ENCODE measurements at regions of chr2 and their contacts with region 1.

Region 1: GRCh38 chr2:73939419-73939818 is 12.7 kb downstream of the DGUOK start:
- DNase-seq: peak; percentile 56
- H3K4me3 Mint-ChIP-seq: no peak overlapping the region
- H3K27ac Mint-ChIP-seq: peak overlapping the region; percentile 73
- H3K4me1 Mint-ChIP-seq: peaks cover 85% of the 10 kb centered on the region
- H3K27me3 Mint-ChIP-seq: no peaks in the 10 kb centered on the region

Region 2: GRCh38 chr2:73176881-73177644 is 762.4 kb before region 1 on chr2:
- CTCF ChIA-PET with region 1: no interaction called
- POLR2A ChIA-PET with region 1: no interaction called
- intact Hi-C with region 1: no loop called
- DNase-seq: peak; percentile 91
- H3K4me3 Mint-ChIP-seq: peak overlapping the region; percentile 77
- H3K27ac Mint-ChIP-seq: no peak overlapping the region
- H3K4me1 Mint-ChIP-seq: peaks cover 26% of the 10 kb centered on the region
- H3K27me3 Mint-ChIP-seq: peaks cover 31% of the 10 kb centered on the region

Region 3: DNA sequence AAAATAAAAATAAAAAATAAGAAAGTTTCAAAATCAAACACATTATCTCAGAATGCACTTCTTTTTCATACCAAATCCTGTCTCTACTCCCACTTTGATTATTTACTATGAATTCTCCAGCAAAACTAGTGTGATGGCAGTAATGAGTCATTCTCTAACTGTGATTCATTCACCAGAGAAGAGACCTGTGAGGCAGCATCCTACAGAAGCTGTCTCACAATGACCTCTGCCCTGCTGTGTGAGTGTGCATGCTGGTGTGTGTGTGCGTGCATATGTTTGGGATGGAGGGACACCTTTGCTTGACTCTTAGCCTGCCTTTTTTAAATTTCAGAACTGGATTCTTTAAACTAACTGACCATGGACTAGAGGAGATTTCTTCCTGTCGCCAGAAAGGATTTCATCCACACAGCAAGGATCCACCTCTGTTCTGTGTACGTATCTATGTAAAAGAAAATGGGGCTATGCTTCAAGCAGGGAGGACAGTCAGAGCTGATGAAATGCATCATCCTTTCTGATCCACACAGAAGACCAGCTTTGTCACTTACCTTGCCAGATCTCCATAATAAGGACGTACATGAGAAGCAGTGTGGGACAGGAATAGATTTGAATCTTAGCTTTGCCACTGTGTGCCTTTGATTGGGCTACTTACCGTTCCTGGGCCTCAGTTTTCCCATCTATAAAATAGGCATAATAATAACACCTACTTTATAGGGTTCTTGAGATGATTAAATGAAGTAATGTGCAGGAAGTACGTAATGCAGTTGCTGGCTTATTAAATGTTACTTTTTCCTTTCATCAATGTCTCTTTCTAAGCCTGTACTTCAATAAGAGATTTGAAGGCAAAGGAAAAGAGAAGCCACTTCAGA is 79.5 kb before region 1 on chr2:
- CTCF ChIA-PET with region 1: no interaction called
- POLR2A ChIA-PET with region 1: interaction called, 4 read pairs
- intact Hi-C with region 1: loop called (anchors 2 kb)
- DNase-seq: peak; percentile 76
- H3K4me3 Mint-ChIP-seq: no peak overlapping the region
- H3K27ac Mint-ChIP-seq: peak overlapping the region; percentile 59
- H3K4me1 Mint-ChIP-seq: peaks cover 33% of the 10 kb centered on the region
- H3K27me3 Mint-ChIP-seq: no peaks in the 10 kb centered on the region

Region 4: GRCh38 chr2:73896362-73897239 is 42.8 kb before region 1 on chr2:
- CTCF ChIA-PET with region 1: interaction called, 4 read pairs
- POLR2A ChIA-PET with region 1: no interaction called
- intact Hi-C with region 1: loop called (anchors 5 kb)
- DNase-seq: peak; percentile 62
- H3K4me3 Mint-ChIP-seq: no peak overlapping the region
- H3K27ac Mint-ChIP-seq: peak overlapping the region; percentile 73
- H3K4me1 Mint-ChIP-seq: peaks cover 23% of the 10 kb centered on the region
- H3K27me3 Mint-ChIP-seq: no peaks in the 10 kb centered on the region

Region 5: GRCh38 chr2:74168739-74169138 is 229.3 kb after region 1 on chr2:
- CTCF ChIA-PET with region 1: no interaction called
- POLR2A ChIA-PET with region 1: no interaction called
- intact Hi-C with region 1: no loop called
- DNase-seq: no peak
- H3K4me3 Mint-ChIP-seq: no peak overlapping the region
- H3K27ac Mint-ChIP-seq: peak overlapping the region; percentile 74
- H3K4me1 Mint-ChIP-seq: peaks cover 35% of the 10 kb centered on the region
- H3K27me3 Mint-ChIP-seq: no peaks in the 10 kb centered on the region

Measured in activated CD4-positive, alpha-beta memory T cell treated with anti-CD3 and anti-CD28 coated beads for 36 hours (primary cell).